Astrocyte of the spinal cord (primary cell): ENCODE measurements at regions of chr6 and their contacts with region 1.

Region 1: GRCh38 chr6:134822920-134823709 is 126.8 kb downstream of the ALDH8A1 start:
- DNase-seq: peak; percentile 87
- H3K4me3 ChIP-seq: no peak overlapping the region
- CTCF ChIP-seq: peak; percentile 79

Region 2: DNA sequence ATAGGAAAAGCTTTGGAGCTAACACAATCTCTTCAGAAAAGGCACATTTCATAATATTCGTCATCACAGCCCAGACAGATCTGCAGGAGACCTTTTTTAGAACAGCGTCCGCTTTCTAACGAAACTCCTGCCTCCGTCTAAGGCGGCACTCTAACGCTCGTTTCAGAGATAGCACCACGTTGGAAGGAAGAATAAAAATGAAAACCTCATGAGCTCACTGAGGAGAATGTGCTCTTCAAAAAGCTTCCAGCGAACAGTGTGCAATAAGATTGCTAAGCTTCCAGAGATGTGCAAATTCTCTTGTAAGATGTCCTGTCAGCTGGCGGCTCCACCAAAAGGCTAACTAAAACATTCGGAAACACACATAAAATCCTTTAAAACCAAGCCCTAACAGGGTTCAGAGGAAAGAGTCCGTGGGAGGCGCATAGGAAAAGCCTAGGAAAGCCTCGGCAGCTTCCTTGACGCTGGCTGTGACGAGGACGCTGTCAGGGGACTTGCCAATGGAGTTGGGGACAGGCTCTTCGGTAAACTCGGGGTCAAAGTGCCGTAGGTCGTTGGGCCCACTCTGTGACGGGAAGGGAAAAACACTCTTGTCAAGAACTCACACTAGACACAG is 653.1 kb before region 1 on chr6:
- in situ Hi-C with region 1: loop called (anchors 10 kb)
- DNase-seq: peak; percentile 33
- H3K4me3 ChIP-seq: peak overlapping the region; percentile 93
- CTCF ChIP-seq: no peak

Region 3: DNA sequence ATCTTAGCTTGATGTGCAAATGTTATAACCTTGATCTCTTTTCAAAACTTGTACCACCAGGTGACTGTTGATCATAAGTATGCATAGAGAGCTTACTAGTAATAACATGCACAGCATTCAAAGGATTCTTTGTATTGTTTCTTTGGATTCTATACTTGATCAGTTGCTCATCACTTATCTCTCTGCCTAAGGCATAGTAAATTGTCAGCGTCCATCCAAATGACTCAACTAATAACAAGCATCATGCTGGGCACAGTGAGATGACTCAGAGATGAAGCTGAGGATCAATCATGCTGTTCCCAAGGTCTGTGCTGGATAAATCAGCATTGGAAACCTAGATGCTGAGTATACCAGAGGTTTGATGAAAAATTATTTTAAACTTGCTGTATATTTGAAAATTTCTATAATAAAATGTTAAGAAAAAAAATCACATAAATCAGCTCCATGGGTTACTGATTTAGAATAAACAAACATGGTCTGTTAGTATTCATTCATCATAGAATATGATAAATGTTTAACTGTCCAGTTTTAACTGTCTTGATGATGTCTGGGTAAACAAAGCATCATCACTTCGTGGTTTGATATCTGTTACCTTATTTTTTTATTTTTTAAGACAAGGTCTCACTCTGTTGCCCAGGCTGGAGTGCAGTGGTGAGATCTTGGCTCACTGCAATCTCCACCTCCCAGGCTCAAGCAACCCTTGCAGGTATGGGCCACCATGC is 459.6 kb before region 1 on chr6:
- in situ Hi-C with region 1: loop called (anchors 5 kb)
- DNase-seq: peak; percentile 86
- H3K4me3 ChIP-seq: no peak overlapping the region
- CTCF ChIP-seq: no peak